Activated CD8-positive, alpha-beta memory T cell treated with anti-CD3 and anti-CD28 coated beads, Interleukin-2, amount 10 ng/mL, durations not matched to agents 7 days and 5 days (primary cell): ENCODE measurements at regions of chr17 and their contacts with region 1.

Region 1: GRCh38 chr17:9522074-9522473 is 53.5 kb downstream of the STX8 start:
- DNase-seq: no peak
- ATAC-seq: no peak
- H3K4me3 Mint-ChIP-seq: no peak overlapping the region
- H3K27ac Mint-ChIP-seq: no peak overlapping the region
- H3K4me1 Mint-ChIP-seq: peaks cover 13% of the 10 kb centered on the region
- H3K27me3 Mint-ChIP-seq: no peaks in the 10 kb centered on the region

Region 2: GRCh38 chr17:9402590-9403199 is 119.4 kb before region 1 on chr17:
- CTCF ChIA-PET with region 1: interaction called, 16 read pairs
- DNase-seq: peak; percentile 58
- ATAC-seq: no peak
- H3K4me3 Mint-ChIP-seq: no peak overlapping the region
- H3K27ac Mint-ChIP-seq: no peak overlapping the region
- H3K4me1 Mint-ChIP-seq: no peaks in the 10 kb centered on the region
- H3K27me3 Mint-ChIP-seq: no peaks in the 10 kb centered on the region

Region 3: GRCh38 chr17:9479964-9480363 is 42.1 kb before region 1 on chr17:
- CTCF ChIA-PET with region 1: no interaction called
- DNase-seq: no peak
- ATAC-seq: no peak
- H3K4me3 Mint-ChIP-seq: no peak overlapping the region
- H3K27ac Mint-ChIP-seq: no peak overlapping the region
- H3K4me1 Mint-ChIP-seq: no peaks in the 10 kb centered on the region
- H3K27me3 Mint-ChIP-seq: no peaks in the 10 kb centered on the region